AG04449 (cell line): ENCODE measurements at regions of chr6 and their contacts with region 1.

Region 1: DNA sequence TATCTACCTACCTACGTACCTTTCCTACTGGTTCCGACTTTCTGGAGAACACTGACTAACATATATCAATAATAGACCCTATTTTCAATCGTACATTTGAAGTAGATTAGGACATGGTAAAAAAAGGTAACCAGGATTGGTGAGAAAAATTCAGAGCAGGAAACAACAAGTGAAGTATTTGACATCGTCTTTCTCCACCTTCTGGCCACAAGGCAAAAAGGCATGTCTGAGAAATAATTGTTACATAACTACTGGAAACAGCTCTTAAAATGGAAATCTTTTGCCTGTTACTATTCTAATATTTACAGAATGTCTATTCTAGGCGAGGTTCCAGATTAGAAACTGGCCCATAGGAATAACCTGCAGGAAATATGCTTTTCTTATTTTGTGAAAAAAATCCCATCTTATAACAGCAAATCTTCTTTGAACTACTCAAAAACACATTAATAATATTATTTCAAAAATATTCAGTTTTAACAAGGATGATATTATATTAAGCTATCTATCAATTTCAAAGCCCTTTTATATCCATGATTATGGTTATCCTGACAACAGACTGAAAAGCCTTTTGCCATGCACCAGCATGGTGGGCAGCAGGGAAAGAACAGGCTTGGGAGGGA is 80.8 kb downstream of the RCAN2 start:
- DNase-seq: no peak
- H3K4me3 ChIP-seq: no peak overlapping the region
- CTCF ChIP-seq: peak; percentile 41

Region 2: GRCh38 chr6:46221222-46221793 is 189.1 kb before region 1 on chr6:
- CTCF ChIA-PET with region 1: interaction called, 50 read pairs
- POLR2A ChIA-PET with region 1: no interaction called
- DNase-seq: no peak
- H3K4me3 ChIP-seq: no peak overlapping the region
- CTCF ChIP-seq: peak; percentile 52